H1 (cell line): ENCODE measurements at regions of chr11 and their contacts with region 1.

Region 1: DNA sequence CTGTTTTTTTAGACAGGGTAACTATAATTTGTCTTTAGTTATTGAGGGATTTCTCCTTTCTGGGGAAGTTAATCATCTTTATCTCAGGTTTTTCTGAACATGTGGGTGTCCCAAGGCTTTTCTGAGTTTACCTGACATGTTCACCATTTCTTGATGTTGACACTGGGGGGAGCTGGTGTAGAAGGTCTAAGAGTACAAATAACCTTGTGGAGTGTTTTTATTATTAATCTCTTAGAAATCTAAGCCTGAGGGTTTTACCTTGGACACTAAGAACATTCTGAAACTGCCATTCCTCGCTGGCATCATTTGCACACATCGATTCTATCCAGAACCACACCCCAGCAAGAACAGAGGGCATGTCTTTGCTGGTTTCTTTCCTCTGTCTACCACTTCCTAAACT is 15.6 kb upstream of the C11orf91 start:
- DNase-seq: no peak
- H3K4me3 ChIP-seq: no peak overlapping the region
- H3K27ac ChIP-seq: no peak overlapping the region
- H3K4me1 ChIP-seq: no peaks in the 10 kb centered on the region
- H3K27me3 ChIP-seq: no peaks in the 10 kb centered on the region
- CTCF ChIP-seq: peak in 2 of 3 experiments; percentile 21 to 29; a peak in 2 of 4 replicates
- EP300 ChIP-seq: no peak
- POLR2A ChIP-seq: no peak
- RAD21 ChIP-seq: peak; percentile 54 to 56

Region 2: DNA sequence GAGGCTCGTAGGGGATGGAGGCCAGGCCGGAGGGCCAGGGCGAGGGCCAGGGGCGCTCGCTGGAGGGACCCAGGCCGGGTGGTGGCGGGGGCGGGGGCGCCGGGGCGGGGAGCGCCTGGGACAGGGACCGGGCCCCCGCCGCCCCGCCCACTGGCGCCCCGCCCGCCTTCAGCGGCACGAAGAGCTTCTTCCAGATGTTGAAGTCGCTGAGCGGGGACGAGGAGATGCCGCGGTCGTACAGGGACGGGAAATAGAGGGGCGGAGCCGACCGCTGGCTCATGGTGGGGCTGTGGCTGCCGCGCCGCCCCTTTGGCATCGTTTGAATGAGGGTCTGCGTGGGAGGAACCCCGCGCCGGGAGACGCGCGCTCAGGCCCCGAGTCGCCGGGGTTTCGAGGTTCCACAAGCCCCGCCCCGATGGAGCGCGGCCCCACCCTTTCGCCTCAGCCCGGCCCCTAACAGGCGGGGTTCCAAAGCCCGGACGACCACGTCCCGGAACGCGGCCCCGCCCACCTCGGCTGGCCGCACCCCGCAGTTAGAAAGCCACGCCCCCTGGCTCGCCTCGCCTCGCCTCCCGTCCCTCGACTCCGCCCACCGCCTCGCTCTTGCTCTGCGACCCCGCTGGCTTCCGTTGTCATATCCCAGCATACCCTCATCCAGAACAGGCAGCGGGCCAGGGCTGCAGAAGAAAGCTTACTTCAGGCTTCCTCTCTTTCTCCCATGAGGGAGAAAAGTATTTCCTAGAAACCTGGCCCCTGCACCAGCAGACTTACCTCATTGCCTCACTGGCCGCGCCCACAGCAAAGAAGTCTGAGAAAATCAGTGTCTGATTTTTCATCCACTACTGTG is 15.6 kb before region 1 on chr11 and contains the start of gene C11orf91:
- CTCF ChIA-PET with region 1: interaction called, 12 read pairs
- POLR2A ChIA-PET with region 1: interaction called, 4 read pairs
- DNase-seq: peak; percentile 82 to 99
- H3K4me3 ChIP-seq: peak within 1 kb of the TSS; percentile 72 to 76 (median 74)
- H3K27ac ChIP-seq: no peak within 1 kb of the TSS; the same call in 1 of the 2 replicates
- H3K4me1 ChIP-seq: peaks cover 0 to 7% (median 4%) of the 10 kb centered on the region in 4 experiments; a peak in 6 of 7 replicates
- H3K27me3 ChIP-seq: peaks cover 0 to 9% (median 3%) of the 10 kb centered on the region in 4 experiments; a peak in 4 of 7 replicates
- CTCF ChIP-seq: no peak
- EP300 ChIP-seq: no peak
- POLR2A ChIP-seq: peak in 1 of 2 experiments; percentile 83; a peak in 2 of 3 replicates
- RAD21 ChIP-seq: no peak
- total RNA-seq, gene C11orf91: not detected in 2 replicates

Region 3: GRCh38 chr11:33742249-33742851 is 26.1 kb after region 1 on chr11:
- CTCF ChIA-PET with region 1: interaction called, 19 read pairs
- POLR2A ChIA-PET with region 1: no interaction called
- DNase-seq: no peak
- H3K4me3 ChIP-seq: no peak overlapping the region
- H3K27ac ChIP-seq: no peak overlapping the region
- H3K4me1 ChIP-seq: no peaks in the 10 kb centered on the region
- H3K27me3 ChIP-seq: no peaks in the 10 kb centered on the region
- CTCF ChIP-seq: no peak
- EP300 ChIP-seq: no peak
- POLR2A ChIP-seq: no peak
- RAD21 ChIP-seq: peak in 1 of 2 experiments; percentile 14; a peak in 1 of 4 replicates